Panc1 (cell line): ENCODE measurements at regions of chr5 and their contacts with region 1.

Region 1: GRCh38 chr5:146291421-146292074 is 47.1 kb upstream of the POU4F3 start:
- DNase-seq: peak; percentile 12
- ATAC-seq: peak; percentile 80
- H3K4me3 ChIP-seq: no peak overlapping the region
- H3K27ac ChIP-seq: no peak overlapping the region
- H3K4me1 ChIP-seq: no peaks in the 10 kb centered on the region; the same call in 1 of the 2 replicates
- H3K27me3 ChIP-seq: no peaks in the 10 kb centered on the region
- CTCF ChIP-seq: peak; percentile 71; the same call in 1 of the 2 replicates

Region 2: GRCh38 chr5:146249801-146250200 is 41.7 kb before region 1 on chr5:
- CTCF ChIA-PET with region 1: no interaction called
- POLR2A ChIA-PET with region 1: interaction called, 11 read pairs
- in situ Hi-C with region 1: no loop called
- intact Hi-C with region 1: no loop called
- DNase-seq: no peak
- ATAC-seq: no peak
- H3K4me3 ChIP-seq: no peak overlapping the region
- H3K27ac ChIP-seq: no peak overlapping the region
- H3K4me1 ChIP-seq: no peaks in the 10 kb centered on the region
- H3K27me3 ChIP-seq: no peaks in the 10 kb centered on the region
- CTCF ChIP-seq: no peak

Region 3: GRCh38 chr5:146345578-146346366 is 54.2 kb after region 1 on chr5:
- CTCF ChIA-PET with region 1: no interaction called
- POLR2A ChIA-PET with region 1: no interaction called
- in situ Hi-C with region 1: no loop called
- intact Hi-C with region 1: no loop called
- DNase-seq: no peak
- ATAC-seq: no peak
- H3K4me3 ChIP-seq: no peak overlapping the region
- H3K27ac ChIP-seq: no peak overlapping the region
- H3K4me1 ChIP-seq: no peaks in the 10 kb centered on the region
- H3K27me3 ChIP-seq: peaks cover 13% of the 10 kb centered on the region
- CTCF ChIP-seq: no peak

Region 4: GRCh38 chr5:146419696-146420095 is 128.1 kb after region 1 on chr5:
- CTCF ChIA-PET with region 1: no interaction called
- POLR2A ChIA-PET with region 1: interaction called, 13 read pairs
- in situ Hi-C with region 1: no loop called
- intact Hi-C with region 1: no loop called
- DNase-seq: no peak
- ATAC-seq: no peak
- H3K4me3 ChIP-seq: no peak overlapping the region
- H3K27ac ChIP-seq: no peak overlapping the region
- H3K4me1 ChIP-seq: no peaks in the 10 kb centered on the region
- H3K27me3 ChIP-seq: no peaks in the 10 kb centered on the region; the same call in 1 of the 2 replicates
- CTCF ChIP-seq: no peak

Region 5: DNA sequence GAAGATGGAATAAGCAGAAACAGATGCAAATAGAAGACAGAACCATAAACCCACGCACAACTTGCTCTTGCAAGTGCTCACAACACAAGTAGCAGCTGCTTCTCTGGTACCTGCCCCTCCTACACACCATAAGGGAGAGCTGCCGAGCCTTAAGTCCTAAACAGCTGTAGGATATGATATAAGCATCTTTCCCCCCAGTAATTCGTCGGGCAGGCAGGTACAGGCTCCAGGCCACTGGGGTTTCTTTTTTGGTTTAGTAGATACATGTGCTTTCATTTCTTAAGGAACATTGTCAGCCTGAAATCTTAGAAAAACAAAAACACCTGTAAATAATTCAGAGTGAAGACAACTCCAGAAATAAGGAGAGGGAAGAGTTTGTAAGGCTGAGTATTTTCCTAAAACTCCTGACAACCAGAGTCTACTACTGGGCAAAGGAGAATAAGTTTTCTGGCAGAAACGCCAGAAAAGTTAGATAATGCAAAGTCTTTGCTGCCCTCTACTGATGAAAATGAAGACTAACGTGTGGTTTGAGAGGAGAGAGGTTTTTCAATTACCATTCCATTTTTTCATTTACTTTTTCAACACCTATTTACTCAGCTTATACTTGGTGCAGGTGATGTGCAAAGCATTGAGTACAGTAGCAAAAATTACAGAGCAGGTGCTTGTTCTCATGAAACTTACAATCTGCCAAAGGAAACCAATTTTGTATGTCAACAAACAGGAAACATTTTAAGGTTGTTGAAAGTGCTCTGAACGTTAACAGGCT is 135.5 kb after region 1 on chr5:
- CTCF ChIA-PET with region 1: no interaction called
- POLR2A ChIA-PET with region 1: no interaction called
- in situ Hi-C with region 1: no loop called
- intact Hi-C with region 1: loop called (anchors 1 kb)
- DNase-seq: no peak
- ATAC-seq: peak; percentile 85
- H3K4me3 ChIP-seq: no peak overlapping the region
- H3K27ac ChIP-seq: no peak overlapping the region
- H3K4me1 ChIP-seq: 0 out of 2 replicates have a peak, but pooled peaks cover 2% of the 10 kb centered on the region
- H3K27me3 ChIP-seq: no peaks in the 10 kb centered on the region
- CTCF ChIP-seq: peak; percentile 73